MCF 10A (cell line): ENCODE measurements at regions of chr21 and their contacts with region 1.

Region 1: DNA sequence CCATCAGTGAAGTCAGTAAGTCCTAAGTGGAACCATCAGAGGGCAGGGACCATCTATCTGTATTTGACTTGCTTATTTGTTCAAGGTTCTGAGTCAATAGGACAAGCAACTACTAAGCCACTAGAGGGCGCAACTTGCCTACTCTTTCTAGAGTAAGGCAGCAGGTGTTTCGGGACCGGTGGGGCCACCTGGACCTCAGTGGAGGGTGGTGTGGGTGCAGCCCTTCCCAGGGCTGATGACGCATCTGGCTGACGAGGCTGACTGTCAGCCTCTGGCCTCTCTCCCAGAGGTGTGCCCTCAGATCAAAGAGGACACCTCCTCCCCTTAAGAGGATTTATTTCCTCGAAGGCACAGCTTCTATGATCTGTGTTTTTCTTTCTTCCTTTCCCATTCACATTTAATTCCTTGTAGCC is 6.6 kb downstream of the CBR3 start:
- DNase-seq: peak; percentile 98
- H3K4me3 Mint-ChIP-seq: no peak overlapping the region
- H3K27ac Mint-ChIP-seq: no peak overlapping the region
- H3K4me1 Mint-ChIP-seq: peaks cover 9% of the 10 kb centered on the region
- H3K27me3 Mint-ChIP-seq: no peaks in the 10 kb centered on the region
- CTCF ChIP-seq: peak; percentile 77

Region 2: GRCh38 chr21:36125512-36126222 is 15.9 kb before region 1 on chr21:
- CTCF ChIA-PET with region 1: interaction called, 10 read pairs
- POLR2A ChIA-PET with region 1: interaction called, 10 read pairs
- intact Hi-C with region 1: no loop called
- DNase-seq: peak; percentile 54
- H3K4me3 Mint-ChIP-seq: no peak overlapping the region
- H3K27ac Mint-ChIP-seq: no peak overlapping the region
- H3K4me1 Mint-ChIP-seq: peaks cover 14% of the 10 kb centered on the region
- H3K27me3 Mint-ChIP-seq: no peaks in the 10 kb centered on the region
- CTCF ChIP-seq: peak; percentile 79

Region 3: DNA sequence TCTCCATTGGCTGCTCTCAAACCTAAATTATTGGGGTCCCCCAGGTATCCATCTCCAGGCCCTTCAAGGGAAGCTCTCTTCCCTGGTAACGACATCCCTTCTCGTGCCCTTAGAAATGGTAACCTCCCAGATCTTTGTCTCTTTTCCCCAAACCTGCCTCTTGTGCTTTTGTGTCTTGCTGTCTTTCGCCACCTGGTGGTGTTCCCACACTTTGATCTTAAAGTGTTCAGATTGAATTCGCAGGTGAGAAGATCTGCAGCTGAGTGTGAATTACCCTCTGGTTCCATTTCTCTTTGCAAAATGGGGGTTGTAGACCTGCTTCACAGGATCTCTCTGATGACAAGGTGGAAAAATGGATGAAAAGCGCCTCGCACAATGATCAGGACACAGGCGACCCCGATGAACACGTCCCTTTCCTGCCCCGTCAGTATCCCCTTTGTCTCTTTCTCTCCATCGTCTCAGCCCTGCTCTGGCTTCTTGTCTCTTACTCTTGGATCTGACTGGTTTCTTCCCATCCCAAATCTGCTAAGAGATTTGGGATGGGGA is 68.2 kb after region 1 on chr21:
- CTCF ChIA-PET with region 1: interaction called, 24 read pairs
- POLR2A ChIA-PET with region 1: interaction called, 4 read pairs
- intact Hi-C with region 1: loop called (anchors 1 kb)
- DNase-seq: peak; percentile 86
- H3K4me3 Mint-ChIP-seq: peak overlapping the region; percentile 61
- H3K27ac Mint-ChIP-seq: peak overlapping the region; percentile 80
- H3K4me1 Mint-ChIP-seq: peaks cover 16% of the 10 kb centered on the region
- H3K27me3 Mint-ChIP-seq: no peaks in the 10 kb centered on the region
- CTCF ChIP-seq: peak; percentile 50

Region 4: GRCh38 chr21:36385233-36386030 is 243.9 kb after region 1 on chr21 and contains the start of gene CHAF1B:
- CTCF ChIA-PET with region 1: no interaction called
- POLR2A ChIA-PET with region 1: no interaction called
- intact Hi-C with region 1: loop called (anchors 5 kb)
- DNase-seq: peak; percentile 82
- H3K4me3 Mint-ChIP-seq: peak within 1 kb of the TSS; percentile 70
- H3K27ac Mint-ChIP-seq: no peak within 1 kb of the TSS
- H3K4me1 Mint-ChIP-seq: no peaks in the 10 kb centered on the region
- H3K27me3 Mint-ChIP-seq: no peaks in the 10 kb centered on the region
- CTCF ChIP-seq: no peak
- total RNA-seq, gene CHAF1B: 6.4 and 7.7 TPM in 2 replicates

Region 5: DNA sequence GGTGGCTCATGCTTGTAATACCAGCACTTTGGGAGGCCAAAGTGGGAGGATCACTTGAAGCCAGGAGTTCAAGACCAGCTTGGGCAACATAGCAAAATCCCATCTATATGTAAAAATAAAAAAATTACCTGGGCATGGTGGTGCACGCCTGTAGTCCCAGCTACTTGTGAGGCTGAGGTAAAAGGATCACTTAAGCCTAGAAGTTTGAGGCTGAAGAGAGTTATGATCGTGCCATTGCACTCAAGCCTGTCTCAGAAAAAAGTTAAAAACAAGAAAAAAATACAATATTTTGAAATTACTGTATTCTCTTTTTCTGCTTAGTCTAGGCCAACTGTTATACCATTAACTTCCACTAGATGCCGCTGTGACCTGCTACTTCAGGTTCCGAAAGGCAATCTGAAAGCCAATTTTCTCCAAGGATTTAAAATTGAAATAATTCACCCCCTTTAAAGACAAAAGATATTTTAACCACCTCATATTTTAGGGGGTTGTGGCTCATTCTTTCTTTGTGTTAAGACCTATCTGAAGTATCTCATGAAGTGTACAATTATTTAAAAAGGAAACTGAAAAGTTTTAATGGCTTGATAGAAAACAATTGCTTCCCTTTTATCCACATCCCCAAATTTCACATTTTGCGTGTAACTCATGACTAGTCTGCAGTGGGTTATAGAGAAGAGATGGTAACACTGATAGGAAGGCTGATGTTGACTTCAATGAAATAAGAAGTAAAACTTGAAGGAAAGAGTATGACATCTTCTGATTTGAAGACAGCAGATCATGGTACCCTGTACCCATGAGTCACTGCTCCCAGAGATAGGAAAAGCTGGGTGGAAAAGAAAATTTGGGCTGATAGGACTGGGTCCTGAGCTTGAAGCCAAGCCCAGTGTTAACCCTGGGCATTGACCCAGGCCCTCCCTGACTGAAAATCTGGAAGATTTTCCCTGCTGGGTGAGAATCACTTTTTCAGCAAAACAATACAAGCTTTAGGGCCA is 362.8 kb after region 1 on chr21:
- CTCF ChIA-PET with region 1: no interaction called
- POLR2A ChIA-PET with region 1: no interaction called
- intact Hi-C with region 1: loop called (anchors 10 kb)
- DNase-seq: peak; percentile 57
- H3K4me3 Mint-ChIP-seq: no peak overlapping the region
- H3K27ac Mint-ChIP-seq: no peak overlapping the region
- H3K4me1 Mint-ChIP-seq: peaks cover 6% of the 10 kb centered on the region
- H3K27me3 Mint-ChIP-seq: no peaks in the 10 kb centered on the region
- CTCF ChIP-seq: peak; percentile 83